Heart right ventricle (tissue), 16 donors: ENCODE measurements at regions of chr6 and their contacts with region 1.

Region 1: GRCh38 chr6:122969999-122970533 is 26.0 kb upstream of the CLVS2 start:
- DNase-seq: no peak
- ATAC-seq: no peak
- H3K4me3 ChIP-seq: no peak overlapping the region
- H3K27ac ChIP-seq: no peak overlapping the region
- H3K4me1 ChIP-seq: no peaks in the 10 kb centered on the region
- H3K27me3 ChIP-seq: no peaks in the 10 kb centered on the region
- CTCF ChIP-seq: no peak

Region 2: DNA sequence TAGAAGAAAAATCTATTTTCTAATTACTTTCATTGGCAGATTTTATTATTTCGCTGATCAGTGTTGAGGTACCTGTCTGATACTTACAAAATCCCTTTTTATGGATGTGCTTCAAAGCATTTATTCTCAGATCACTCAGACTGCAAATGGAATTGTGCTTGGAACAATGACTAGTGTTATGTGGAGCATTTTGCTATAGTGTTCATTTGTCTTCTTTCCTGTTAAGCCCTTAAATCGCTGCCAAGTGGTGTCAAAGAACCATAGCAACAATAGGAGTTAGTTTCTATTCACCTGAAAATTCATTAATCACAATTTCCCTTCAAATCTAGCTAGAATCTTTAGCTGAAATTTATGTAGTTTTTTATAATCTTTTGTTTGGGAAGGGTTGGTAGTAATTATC is 151.2 kb before region 1 on chr6:
- intact Hi-C with region 1: no loop called
- DNase-seq: no peak
- ATAC-seq: no peak
- H3K4me3 ChIP-seq: no peak overlapping the region
- H3K27ac ChIP-seq: no peak overlapping the region
- H3K4me1 ChIP-seq: no peaks in the 10 kb centered on the region
- H3K27me3 ChIP-seq: peaks cover 0 to 3% (median 0%) of the 10 kb centered on the region in 7 donors
- CTCF ChIP-seq: no peak

Region 3: GRCh38 chr6:123551939-123552707 is 582.1 kb after region 1 on chr6:
- intact Hi-C with region 1: loop called in 1 of 10 experiments (anchors 5 kb)
- DNase-seq: no peak
- ATAC-seq: peak in 1 of 8 donors; percentile 58
- H3K4me3 ChIP-seq: peak overlapping the region in 1 of 10 donors; percentile 3
- H3K27ac ChIP-seq: peak overlapping the region in 3 of 10 donors; percentile 16 to 38 (median 37)
- H3K4me1 ChIP-seq: peaks cover 0 to 45% (median 13%) of the 10 kb centered on the region in 9 donors
- H3K27me3 ChIP-seq: no peaks in the 10 kb centered on the region
- CTCF ChIP-seq: no peak

Region 4: GRCh38 chr6:123879749-123880148 is 909.7 kb after region 1 on chr6:
- intact Hi-C with region 1: loop called in 1 of 10 experiments (anchors 5 kb)
- DNase-seq: no peak
- ATAC-seq: no peak
- H3K4me3 ChIP-seq: no peak overlapping the region
- H3K27ac ChIP-seq: no peak overlapping the region
- H3K4me1 ChIP-seq: no peaks in the 10 kb centered on the region
- H3K27me3 ChIP-seq: no peaks in the 10 kb centered on the region
- CTCF ChIP-seq: no peak